OCI-LY7 (cell line): ENCODE measurements at regions of chr7 and their contacts with region 1.

Region 1: DNA sequence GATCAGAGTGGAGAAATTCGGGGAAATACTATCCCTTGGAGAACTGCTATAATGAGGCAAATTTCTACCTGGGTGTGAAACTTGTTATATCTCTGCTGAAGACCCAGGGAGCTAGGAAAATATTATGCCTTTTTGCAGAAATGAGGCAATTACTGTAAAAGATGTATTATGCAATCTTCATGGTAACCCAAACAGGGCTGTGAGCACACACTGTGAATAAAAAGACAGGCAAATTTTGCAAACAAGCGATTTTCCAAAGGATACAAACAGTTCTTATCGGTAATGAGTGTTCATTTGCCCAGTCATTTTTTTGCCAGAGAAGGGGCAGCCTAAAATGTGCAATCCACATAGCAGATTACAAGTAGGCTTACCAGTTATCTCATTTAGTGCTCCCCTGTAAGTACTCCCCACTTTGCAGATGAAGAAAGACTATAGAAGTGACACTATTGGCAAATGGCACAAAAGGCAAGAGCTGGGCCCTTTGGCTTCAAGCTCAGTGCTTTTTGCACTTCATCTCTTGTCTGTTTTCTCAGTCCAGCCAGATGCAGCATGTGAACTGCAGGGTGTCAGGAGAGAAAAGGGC is 205.8 kb downstream of the HECW1 start:
- DNase-seq: no peak
- H3K4me3 ChIP-seq: no peak overlapping the region
- H3K27ac ChIP-seq: no peak overlapping the region
- H3K4me1 ChIP-seq: no peaks in the 10 kb centered on the region
- CTCF ChIP-seq: no peak

Region 2: GRCh38 chr7:43265139-43265538 is 53.1 kb before region 1 on chr7:
- CTCF ChIA-PET with region 1: no interaction called
- POLR2A ChIA-PET with region 1: no interaction called
- intact Hi-C with region 1: no loop called
- DNase-seq: no peak
- H3K4me3 ChIP-seq: no peak overlapping the region
- H3K27ac ChIP-seq: no peak overlapping the region
- H3K4me1 ChIP-seq: peaks cover 3% of the 10 kb centered on the region
- CTCF ChIP-seq: no peak

Region 3: GRCh38 chr7:43735802-43736541 is 417.7 kb after region 1 on chr7:
- CTCF ChIA-PET with region 1: no interaction called
- POLR2A ChIA-PET with region 1: interaction called, 10 read pairs
- intact Hi-C with region 1: no loop called
- DNase-seq: no peak
- H3K4me3 ChIP-seq: no peak overlapping the region
- H3K27ac ChIP-seq: no peak overlapping the region
- H3K4me1 ChIP-seq: no peaks in the 10 kb centered on the region
- CTCF ChIP-seq: no peak